Mammary epithelial cell (primary cell): ENCODE measurements at regions of chr2 and their contacts with region 1.

Region 1: DNA sequence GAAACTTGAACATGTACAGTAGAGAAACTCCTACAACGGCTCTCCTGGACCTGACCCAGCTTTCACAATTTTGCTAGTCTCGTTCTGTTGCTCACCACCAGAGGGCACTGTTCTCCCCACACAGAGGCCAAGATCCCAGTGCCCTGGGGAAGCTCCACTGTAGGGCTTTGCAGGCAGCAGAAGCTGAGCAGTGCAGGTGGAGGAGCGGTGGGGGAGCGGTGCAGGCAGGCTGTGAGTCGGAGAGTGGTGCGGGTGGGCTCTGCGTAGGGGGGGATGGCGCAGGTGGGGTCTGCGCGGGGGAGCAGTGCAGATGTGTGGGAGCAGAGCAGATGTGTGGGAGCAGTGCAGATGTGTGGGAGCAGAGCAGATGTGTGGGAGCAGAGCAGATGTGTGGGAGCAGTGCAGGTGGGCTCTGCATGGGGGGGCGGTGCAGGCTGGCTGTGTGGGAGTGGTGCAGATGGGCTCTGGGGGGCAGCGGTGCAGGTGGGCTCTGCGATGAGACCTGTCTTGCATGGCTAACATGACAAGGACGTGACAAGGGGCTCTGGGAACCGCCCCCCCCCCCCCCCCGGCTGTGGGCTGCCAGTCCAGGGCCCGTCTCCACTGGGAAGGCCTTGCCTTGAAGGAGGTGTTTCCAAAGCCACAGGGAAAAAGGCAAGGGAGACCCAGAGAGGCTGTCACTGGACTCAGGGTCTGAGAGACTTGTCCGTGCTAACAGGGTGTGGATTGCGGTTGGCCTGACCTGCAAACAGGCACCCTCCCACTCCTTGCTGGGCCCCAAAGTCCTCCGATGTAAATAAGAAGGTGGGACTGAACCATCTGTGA is 7.3 kb downstream of the CYS1 start:
- DNase-seq: peak; percentile 71
- H3K4me3 ChIP-seq: no peak overlapping the region
- H3K27ac ChIP-seq: no peak overlapping the region
- H3K4me1 ChIP-seq: no peaks in the 10 kb centered on the region
- H3K27me3 ChIP-seq: no peaks in the 10 kb centered on the region
- CTCF ChIP-seq: peak; percentile 79 to 92

Region 2: DNA sequence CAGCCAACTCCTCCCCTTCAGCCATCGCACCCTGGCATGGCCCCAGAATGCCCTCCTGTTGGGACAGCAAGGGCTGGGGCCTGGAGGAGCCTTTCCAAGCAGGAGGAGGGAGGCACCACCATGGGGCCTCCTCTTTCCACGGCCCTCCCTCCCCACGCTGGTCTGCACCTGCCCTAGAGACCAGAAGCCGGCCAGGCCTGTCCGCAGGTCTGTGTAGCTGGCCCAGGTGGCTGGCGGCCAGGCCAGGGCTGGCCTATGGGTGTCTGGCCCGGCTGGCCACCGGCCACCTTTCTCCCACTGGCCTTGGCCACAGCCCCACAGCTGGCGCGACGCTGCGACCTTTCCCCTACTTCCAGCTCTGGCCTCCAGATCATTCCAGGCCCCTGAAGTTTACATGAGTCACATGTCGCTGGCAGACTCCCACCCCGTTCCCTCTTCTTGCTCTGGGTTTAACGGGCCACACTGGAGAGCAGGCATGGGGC is 63.0 kb before region 1 on chr2:
- CTCF ChIA-PET with region 1: no interaction called
- dilution Hi-C with region 1: no loop called
- in situ Hi-C with region 1: no loop called
- intact Hi-C with region 1: no loop called
- DNase-seq: no peak
- H3K4me3 ChIP-seq: no peak overlapping the region
- H3K27ac ChIP-seq: no peak overlapping the region
- H3K4me1 ChIP-seq: peaks cover 7% of the 10 kb centered on the region
- H3K27me3 ChIP-seq: no peaks in the 10 kb centered on the region
- CTCF ChIP-seq: no peak

Region 3: DNA sequence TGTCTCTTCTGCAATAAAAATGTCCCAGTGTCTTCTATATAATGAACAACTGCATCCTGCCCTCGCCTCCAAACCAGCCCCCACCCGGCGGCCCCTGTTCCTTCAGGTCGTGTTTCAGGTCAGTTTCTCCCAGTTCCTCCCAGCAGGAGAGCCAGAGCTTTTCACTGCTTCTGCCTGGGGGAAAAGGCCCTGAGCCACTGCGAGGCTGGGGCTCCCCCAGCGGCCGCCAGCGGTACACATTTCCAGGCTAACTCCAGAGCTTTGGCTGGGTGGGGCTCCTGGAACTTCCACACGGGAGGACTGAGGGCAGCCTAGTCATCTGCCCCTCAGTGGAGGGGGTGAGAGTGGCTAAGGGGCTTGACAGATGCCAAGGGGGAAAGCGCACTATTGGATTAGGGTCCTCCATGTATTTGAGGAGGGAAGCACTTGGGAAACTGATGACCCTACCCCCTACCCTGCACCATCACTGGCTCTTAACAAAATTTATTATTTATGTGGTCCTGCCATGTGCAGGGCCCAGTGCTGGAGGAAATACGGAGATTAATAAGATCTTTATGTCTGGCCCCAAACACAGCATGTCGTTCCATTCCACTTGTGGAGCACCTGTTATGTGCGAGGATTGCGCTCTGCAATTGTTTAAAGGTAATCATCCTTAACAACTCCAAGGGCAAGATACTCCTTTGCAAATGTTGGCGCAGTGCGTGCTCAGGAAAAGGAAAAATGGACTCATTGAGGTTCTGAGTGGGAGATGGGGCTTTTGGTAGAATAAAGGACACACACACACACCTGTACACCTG is 24.7 kb after region 1 on chr2:
- CTCF ChIA-PET with region 1: interaction called, 17 read pairs
- dilution Hi-C with region 1: no loop called
- in situ Hi-C with region 1: no loop called
- intact Hi-C with region 1: loop called (anchors 2 kb)
- DNase-seq: peak; percentile 65
- H3K4me3 ChIP-seq: no peak overlapping the region
- H3K27ac ChIP-seq: no peak overlapping the region
- H3K4me1 ChIP-seq: peaks cover 18% of the 10 kb centered on the region
- H3K27me3 ChIP-seq: no peaks in the 10 kb centered on the region
- CTCF ChIP-seq: peak; percentile 88 to 90

Region 4: DNA sequence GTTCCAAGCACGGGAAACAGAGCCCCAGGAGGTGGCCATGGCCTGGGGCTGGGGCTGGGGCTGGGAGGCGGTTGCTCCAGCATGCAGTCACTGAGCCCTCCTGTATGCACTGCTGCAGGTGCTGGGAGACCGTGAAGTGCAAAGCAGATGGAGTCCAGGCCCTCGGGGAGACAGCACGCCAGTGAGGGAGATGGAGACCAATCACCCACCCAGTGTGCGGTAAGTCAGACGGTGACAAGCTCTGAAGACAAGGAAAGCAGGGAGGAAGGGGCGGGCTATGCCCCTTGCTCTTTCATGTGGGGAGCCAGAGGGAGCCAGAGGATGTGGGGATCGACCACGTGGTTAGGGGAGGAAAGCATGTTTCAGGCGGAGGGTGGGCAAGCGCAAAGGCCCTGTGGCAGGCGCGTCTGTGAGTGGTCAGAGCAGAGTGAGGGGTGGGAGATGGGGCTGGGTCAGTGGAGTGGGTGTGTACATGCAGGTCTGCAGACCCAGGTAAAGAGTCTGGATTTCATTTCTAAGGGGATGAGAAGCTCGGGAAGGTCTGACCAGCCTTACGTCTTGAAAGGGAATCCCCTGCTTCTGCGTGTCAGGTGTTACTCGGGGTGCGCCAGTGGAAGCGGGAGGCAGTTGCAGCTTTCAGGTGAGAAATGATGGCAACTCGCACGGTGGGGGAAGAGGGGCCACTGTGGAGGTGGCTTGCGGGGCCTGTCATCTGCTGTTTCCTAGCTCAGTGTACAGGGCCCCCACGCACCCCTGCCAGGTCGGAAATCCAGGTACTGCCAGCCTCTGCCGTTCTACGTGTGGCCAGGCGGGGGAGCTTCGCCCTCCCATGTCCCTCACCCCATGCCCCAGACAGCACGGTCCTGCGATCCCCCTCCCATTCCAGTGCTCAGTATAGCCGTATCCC is 69.1 kb after region 1 on chr2:
- CTCF ChIA-PET with region 1: no interaction called
- dilution Hi-C with region 1: no loop called
- in situ Hi-C with region 1: no loop called
- intact Hi-C with region 1: loop called (anchors 1 kb)
- DNase-seq: no peak
- H3K4me3 ChIP-seq: no peak overlapping the region
- H3K27ac ChIP-seq: no peak overlapping the region
- H3K4me1 ChIP-seq: peaks cover 10% of the 10 kb centered on the region
- H3K27me3 ChIP-seq: no peaks in the 10 kb centered on the region
- CTCF ChIP-seq: peak; percentile 49 to 70

Region 5: DNA sequence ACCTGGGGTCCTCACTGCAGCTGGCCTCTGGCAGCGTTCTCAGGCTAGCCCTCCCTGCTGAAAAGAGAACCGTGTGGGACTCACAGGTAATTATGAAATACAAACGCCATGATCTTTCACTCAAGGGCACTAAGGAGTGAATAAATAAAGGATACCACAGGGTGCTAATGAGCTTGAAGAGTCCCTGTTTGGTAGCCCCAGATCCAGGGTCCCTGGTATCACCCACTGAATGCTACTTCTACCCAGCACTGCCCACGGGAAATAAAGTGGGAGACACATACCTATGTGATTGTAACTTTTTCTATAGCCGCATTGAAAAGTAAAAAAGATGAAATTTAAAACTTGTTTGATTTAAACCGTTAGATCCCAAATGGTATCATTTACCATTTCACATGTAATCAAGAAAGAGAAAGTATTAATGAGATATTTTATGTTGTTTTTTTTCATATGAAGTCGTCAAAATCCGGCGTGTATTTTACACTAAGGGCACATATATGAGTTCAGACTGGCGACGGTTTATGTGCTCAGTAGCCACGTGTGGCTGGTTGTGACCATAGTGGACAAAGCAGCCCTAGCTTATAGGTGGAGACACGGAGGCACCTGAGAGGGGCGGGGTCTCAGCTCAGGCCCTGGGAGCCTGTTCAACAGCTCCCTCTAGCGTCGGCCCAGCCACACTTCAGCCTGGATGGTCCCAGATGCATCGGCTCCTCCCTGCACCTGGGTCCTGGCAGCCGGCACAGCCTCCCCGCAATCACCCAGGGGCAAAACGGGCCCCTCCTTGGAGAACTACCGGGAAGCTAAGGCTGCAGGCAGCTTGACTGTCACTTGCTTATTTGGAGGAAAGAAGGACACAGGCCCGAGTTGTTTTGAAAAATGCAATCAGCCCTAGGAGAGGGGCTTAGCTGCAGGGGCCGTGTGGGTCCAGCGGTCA is 336.0 kb after region 1 on chr2:
- CTCF ChIA-PET with region 1: interaction called, 23 read pairs
- dilution Hi-C with region 1: no loop called
- in situ Hi-C with region 1: loop called in 1 of 2 experiments (anchors 10 kb)
- intact Hi-C with region 1: loop called (anchors 1 kb)
- DNase-seq: peak; percentile 73
- H3K4me3 ChIP-seq: no peak overlapping the region
- H3K27ac ChIP-seq: peak overlapping the region; percentile 98
- H3K4me1 ChIP-seq: peaks cover 74% of the 10 kb centered on the region
- H3K27me3 ChIP-seq: no peaks in the 10 kb centered on the region
- CTCF ChIP-seq: peak; percentile 79 to 99

Region 6: DNA sequence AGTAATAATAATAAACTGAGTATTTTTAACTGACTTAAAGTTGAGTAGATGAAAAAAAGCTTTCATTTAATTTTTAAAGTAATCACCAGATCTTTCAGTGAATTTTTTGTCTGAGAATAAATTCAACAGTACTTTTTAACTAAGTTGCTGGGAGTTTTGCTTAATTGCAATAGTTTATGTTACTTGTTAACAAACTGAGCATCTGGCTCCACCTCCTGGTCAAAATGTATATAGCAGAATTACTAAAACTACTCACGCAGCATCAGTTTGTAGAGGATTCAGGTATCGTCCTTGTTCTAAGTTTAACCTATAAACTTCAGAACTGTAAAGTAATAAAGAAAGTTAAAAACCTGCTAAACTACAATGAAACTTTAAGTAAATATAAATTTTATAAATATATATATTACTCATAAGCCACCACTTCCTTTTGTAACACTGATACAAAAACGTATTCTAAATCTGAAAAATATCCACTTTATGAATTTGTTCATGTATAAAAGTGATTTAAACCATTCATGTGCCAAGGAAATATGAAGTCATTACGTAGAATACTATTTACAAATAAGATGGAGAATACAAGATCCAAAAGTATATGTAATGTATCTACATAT is 595.6 kb after region 1 on chr2:
- CTCF ChIA-PET with region 1: no interaction called
- dilution Hi-C with region 1: no loop called
- in situ Hi-C with region 1: loop called in 1 of 2 experiments (anchors 25 kb)
- intact Hi-C with region 1: loop called (anchors 2 kb)
- DNase-seq: peak; percentile 39
- H3K4me3 ChIP-seq: no peak overlapping the region
- H3K27ac ChIP-seq: no peak overlapping the region
- H3K4me1 ChIP-seq: no peaks in the 10 kb centered on the region
- H3K27me3 ChIP-seq: no peaks in the 10 kb centered on the region
- CTCF ChIP-seq: peak; percentile 61 to 68